ENCODE measurements at regions of chr12 and their contacts with region 1.

Region 1: GRCh38 chr12:6944381-6945186 is 762 bp downstream of the C12orf57 start:
- DNase-seq: peak; percentile 70 to 87 (median 84)
- ATAC-seq: peak; percentile 65
- H3K4me3 ChIP-seq: peak overlapping the region; percentile 94
- H3K4me3 Mint-ChIP-seq: peak overlapping the region; percentile 88 to 100 (median 96)
- H3K27ac ChIP-seq: peak overlapping the region; percentile 95
- H3K27ac Mint-ChIP-seq: peak overlapping the region; percentile 95 to 100 (median 98)
- H3K4me1 ChIP-seq: peaks cover 56% of the 10 kb centered on the region in 2 donors
- H3K4me1 Mint-ChIP-seq: peaks cover 42 to 75% (median 60%) of the 10 kb centered on the region in 7 donors
- H3K27me3 ChIP-seq: no peaks in the 10 kb centered on the region
- H3K27me3 Mint-ChIP-seq: no peaks in the 10 kb centered on the region

Region 2: GRCh38 chr12:6914246-6914946 is 30.2 kb before region 1 on chr12 and contains the start of gene ENO2:
- CTCF ChIA-PET with region 1: interaction called, 3 read pairs
- POLR2A ChIA-PET with region 1: interaction called, 367 read pairs
- intact Hi-C with region 1: no loop called
- DNase-seq: peak; percentile 68 to 90 (median 81)
- ATAC-seq: peak; percentile 96
- H3K4me3 ChIP-seq: peak within 1 kb of the TSS; percentile 79
- H3K4me3 Mint-ChIP-seq: peak within 1 kb of the TSS; percentile 88 to 100 (median 96)
- H3K27ac ChIP-seq: peak within 1 kb of the TSS; percentile 86
- H3K27ac Mint-ChIP-seq: peak within 1 kb of the TSS; percentile 86 to 99 (median 93)
- H3K4me1 ChIP-seq: peaks cover 11 to 14% of the 10 kb centered on the region in 2 donors
- H3K4me1 Mint-ChIP-seq: peaks cover 0 to 53% (median 36%) of the 10 kb centered on the region in 7 donors
- H3K27me3 ChIP-seq: no peaks in the 10 kb centered on the region
- H3K27me3 Mint-ChIP-seq: peaks cover 0 to 4% (median 0%) of the 10 kb centered on the region in 5 donors
- total RNA-seq, gene ENO2: 65.3 to 193 (median 178) TPM

Region 3: DNA sequence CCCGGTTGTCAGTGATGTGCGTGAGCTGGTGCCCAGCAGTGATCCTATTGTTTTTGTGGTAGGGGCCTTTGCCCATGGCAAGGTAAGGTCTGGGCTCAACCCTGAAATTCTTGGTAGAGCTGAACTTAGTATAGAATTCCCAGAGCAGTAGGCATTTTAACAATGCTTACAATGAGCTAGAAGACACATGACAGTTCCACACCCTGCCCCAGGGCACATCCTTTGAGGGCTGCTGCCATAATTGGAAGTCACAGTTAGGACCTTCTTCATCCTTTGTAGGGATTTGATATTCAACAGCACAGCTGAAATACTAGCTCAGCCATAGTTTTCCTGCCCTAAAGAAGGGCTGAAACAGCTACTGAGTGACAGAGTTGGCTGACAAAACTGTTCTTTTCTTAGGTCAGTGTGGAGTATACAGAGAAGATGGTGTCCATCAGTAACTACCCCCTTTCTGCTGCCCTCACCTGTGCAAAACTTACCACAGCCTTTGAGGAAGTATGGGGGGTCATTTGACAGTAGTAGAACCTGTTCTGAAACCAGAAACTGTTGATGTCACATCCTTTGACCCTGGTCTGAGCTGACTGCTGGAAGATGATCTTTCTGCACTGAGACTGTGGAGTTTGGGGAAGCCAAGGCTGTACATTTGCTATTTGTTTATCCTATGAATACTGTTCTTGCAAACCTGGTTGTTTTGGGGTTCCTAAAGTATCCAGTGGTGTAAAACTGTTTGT is 30.9 kb after region 1 on chr12:
- CTCF ChIA-PET with region 1: interaction called, 4 read pairs
- POLR2A ChIA-PET with region 1: interaction called, 123 read pairs
- intact Hi-C with region 1: loop called (anchors 1 kb)
- DNase-seq: no peak
- ATAC-seq: no peak
- H3K4me3 ChIP-seq: no peak overlapping the region
- H3K4me3 Mint-ChIP-seq: no peak overlapping the region
- H3K27ac ChIP-seq: no peak overlapping the region
- H3K27ac Mint-ChIP-seq: peak overlapping the region in 2 of 9 donors; percentile 16 to 19
- H3K4me1 ChIP-seq: peaks cover 10 to 14% of the 10 kb centered on the region in 2 donors
- H3K4me1 Mint-ChIP-seq: peaks cover 16 to 31% (median 25%) of the 10 kb centered on the region in 7 donors
- H3K27me3 ChIP-seq: no peaks in the 10 kb centered on the region
- H3K27me3 Mint-ChIP-seq: no peaks in the 10 kb centered on the region

Region 4: DNA sequence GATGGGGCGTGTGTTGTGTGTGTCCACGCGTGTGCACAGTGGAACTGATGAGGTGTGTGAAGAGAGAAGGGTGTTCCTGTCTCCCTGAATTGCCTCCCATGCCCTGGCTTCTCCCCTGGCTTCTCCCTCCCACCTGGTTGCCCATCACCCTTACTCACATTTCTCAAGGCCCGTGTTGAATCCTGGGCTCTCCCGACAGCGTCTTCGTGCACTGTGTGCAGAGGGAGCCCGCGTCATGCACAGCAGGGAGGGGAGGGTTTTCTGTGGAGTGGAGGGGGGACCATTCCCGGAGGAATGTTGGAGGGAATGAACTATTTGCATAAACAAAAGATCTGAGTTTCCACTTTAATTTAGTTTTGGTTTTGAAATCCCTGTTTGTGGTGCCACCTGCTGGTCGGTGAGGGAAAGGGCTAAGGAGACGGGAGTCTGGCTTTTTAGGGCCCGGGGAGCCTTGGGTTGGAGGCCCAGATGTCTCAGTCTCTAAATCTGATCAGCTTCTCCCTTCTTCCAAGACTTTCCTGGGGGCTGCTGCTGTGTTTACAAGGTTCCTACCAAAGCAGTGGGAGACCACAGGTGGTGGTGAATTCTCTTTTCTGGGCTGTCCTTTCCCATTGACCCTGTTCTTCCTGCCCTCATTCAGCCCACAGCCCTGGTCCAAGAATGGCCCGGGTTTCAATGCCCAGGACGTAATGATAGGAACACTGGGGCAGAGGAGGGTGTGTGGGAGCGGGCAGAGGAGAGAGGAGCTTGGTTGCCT is 147.8 kb after region 1 on chr12 and contains the start of gene C1R:
- CTCF ChIA-PET with region 1: interaction called, 3 read pairs
- POLR2A ChIA-PET with region 1: interaction called, 7 read pairs
- intact Hi-C with region 1: loop called (anchors 1 kb)
- DNase-seq: peak; percentile 46 to 71 (median 64)
- ATAC-seq: peak; percentile 81
- H3K4me3 ChIP-seq: peak within 1 kb of the TSS; percentile 66
- H3K4me3 Mint-ChIP-seq: peak within 1 kb of the TSS; percentile 76 to 91 (median 86)
- H3K27ac ChIP-seq: peak within 1 kb of the TSS; percentile 44
- H3K27ac Mint-ChIP-seq: peak within 1 kb of the TSS in 8 of 9 donors; percentile 65 to 94 (median 78)
- H3K4me1 ChIP-seq: peaks cover 7 to 8% of the 10 kb centered on the region in 2 donors
- H3K4me1 Mint-ChIP-seq: peaks cover 0 to 14% (median 9%) of the 10 kb centered on the region in 7 donors
- H3K27me3 ChIP-seq: no peaks in the 10 kb centered on the region
- H3K27me3 Mint-ChIP-seq: no peaks in the 10 kb centered on the region
- total RNA-seq, gene C1R: 1.6 to 7.2 (median 4.8) TPM

Region 5: DNA sequence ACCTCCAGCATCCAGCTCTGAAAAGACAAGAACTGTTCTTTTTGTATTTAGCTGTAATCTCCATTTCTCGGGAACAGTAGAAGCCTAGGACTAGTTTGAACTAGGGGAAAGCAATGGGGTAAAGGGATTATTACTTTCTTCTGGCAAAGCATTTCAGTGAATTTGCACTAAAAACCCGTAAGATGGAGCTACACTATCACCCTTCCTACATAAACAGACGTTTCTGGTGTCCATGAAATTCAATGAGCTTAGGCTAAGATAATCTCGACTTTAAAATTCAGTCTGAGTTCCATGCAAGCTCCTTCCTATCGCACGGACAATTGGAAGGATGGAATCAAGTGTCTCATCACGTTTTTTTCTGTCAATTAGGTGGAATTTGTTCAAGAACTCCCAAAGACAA is 383.3 kb after region 1 on chr12:
- CTCF ChIA-PET with region 1: no interaction called
- POLR2A ChIA-PET with region 1: no interaction called
- intact Hi-C with region 1: no loop called
- DNase-seq: no peak
- ATAC-seq: no peak
- H3K4me3 ChIP-seq: no peak overlapping the region
- H3K4me3 Mint-ChIP-seq: no peak overlapping the region
- H3K27ac ChIP-seq: no peak overlapping the region
- H3K27ac Mint-ChIP-seq: no peak overlapping the region
- H3K4me1 ChIP-seq: no peaks in the 10 kb centered on the region
- H3K4me1 Mint-ChIP-seq: peaks cover 0 to 4% (median 0%) of the 10 kb centered on the region in 7 donors
- H3K27me3 ChIP-seq: no peaks in the 10 kb centered on the region
- H3K27me3 Mint-ChIP-seq: peaks cover 25 to 35% (median 30%) of the 10 kb centered on the region in 5 donors